ENCODE measurements at regions of chr14 and their contacts with region 1.

Region 1: GRCh38 chr14:89954070-89955028 is at the start of gene EFCAB11:
- DNase-seq: peak; percentile 85
- ATAC-seq: peak; percentile 83
- H3K4me3 Mint-ChIP-seq: peak within 1 kb of the TSS; percentile 99
- H3K27ac Mint-ChIP-seq: peak within 1 kb of the TSS; percentile 95
- H3K4me1 Mint-ChIP-seq: peaks cover 32% of the 10 kb centered on the region
- H3K27me3 Mint-ChIP-seq: no peaks in the 10 kb centered on the region
- CTCF ChIP-seq: no peak
- total RNA-seq, gene EFCAB11: 7.5 and 10.0 TPM in 2 replicates

Region 2: DNA sequence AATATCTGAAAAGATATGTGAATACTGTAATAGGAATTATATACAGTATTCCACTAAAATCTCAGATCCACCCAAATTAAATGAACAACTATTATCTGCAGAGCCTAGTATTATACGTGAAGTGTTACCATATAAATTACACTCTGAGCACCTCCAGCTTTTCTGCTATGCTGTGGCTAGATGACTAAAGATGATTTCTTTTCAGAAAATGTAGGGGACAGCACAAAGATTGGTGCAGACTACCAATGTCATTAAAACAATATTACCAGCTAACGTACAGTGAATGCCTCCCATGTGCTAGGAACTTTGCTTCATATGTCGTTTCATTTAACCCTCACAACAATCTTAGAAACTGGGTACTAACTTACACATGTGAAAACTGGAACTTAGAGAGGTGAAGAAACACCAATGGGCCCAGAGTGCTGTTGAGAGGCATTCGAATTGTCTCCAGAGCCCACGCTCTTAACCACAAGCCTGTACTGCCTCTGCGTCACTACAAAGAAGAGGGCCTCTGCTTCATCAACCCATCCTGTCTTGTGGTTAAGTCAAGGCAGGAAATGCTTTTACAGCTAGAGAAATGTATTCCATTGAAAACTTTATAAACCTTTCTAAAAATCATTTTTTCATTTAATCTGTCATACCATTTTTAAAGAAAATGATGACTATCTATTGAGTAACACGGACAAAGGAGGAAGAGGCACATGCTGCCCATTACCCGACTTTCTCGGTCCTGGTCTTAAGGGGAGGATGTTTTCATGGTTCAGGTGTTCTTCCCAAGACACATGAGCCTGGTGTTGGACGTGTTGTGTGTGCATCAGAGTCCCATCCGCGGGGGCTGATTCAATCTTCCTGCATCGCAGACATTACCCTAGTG is 1948.1 kb before region 1 on chr14:
- CTCF ChIA-PET with region 1: no interaction called
- POLR2A ChIA-PET with region 1: no interaction called
- intact Hi-C with region 1: loop called (anchors 5 kb)
- DNase-seq: no peak
- ATAC-seq: peak; percentile 79
- H3K4me3 Mint-ChIP-seq: peak overlapping the region; percentile 83
- H3K27ac Mint-ChIP-seq: peak overlapping the region; percentile 84
- H3K4me1 Mint-ChIP-seq: peaks cover 77% of the 10 kb centered on the region
- H3K27me3 Mint-ChIP-seq: no peaks in the 10 kb centered on the region
- CTCF ChIP-seq: no peak

Region 3: DNA sequence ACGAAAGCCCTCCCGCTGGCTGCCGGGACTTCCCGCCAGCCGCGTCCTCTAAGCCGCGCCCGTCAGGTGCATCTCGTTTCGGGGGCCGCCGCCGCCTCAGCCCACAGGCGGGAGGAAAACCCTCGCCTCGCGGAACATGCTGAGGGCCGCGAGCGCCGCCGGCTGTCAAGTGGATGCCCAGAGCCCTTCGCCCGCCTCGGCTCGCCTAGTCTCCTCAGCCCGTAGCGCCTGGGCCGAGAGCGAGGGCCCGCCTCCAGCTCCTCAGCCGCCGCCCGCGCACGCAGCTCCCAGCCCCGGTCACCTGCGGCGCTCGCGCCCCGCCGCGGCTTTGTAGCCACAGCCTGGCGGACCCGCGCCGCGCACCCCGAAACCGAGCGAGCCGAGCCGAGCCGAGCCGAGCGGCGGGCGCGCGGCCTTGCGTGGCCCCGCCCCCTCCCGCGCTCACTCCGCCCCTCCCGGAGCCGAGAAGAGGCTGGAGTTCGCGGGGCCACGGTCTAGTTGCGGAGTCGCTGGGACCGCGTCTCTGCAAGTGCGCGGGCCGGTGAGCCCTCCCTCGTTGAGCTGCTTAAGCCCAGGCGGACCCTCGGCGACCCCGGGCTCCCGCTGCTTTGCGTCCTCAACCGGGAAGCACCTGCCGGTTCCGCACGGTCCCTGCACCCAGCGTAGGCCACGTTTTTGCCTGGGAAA is 1161.6 kb before region 1 on chr14 and contains the start of gene EML5:
- CTCF ChIA-PET with region 1: no interaction called
- POLR2A ChIA-PET with region 1: interaction called, 4 read pairs
- intact Hi-C with region 1: loop called (anchors 2 kb)
- DNase-seq: peak; percentile 81
- ATAC-seq: peak; percentile 86
- H3K4me3 Mint-ChIP-seq: peak within 1 kb of the TSS; percentile 89
- H3K27ac Mint-ChIP-seq: peak within 1 kb of the TSS; percentile 71
- H3K4me1 Mint-ChIP-seq: peaks cover 24% of the 10 kb centered on the region
- H3K27me3 Mint-ChIP-seq: no peaks in the 10 kb centered on the region
- CTCF ChIP-seq: no peak
- total RNA-seq, gene EML5: 3.8 and 5.0 TPM in 2 replicates

Region 4: GRCh38 chr14:89485264-89485663 is 469.1 kb before region 1 on chr14:
- CTCF ChIA-PET with region 1: no interaction called
- POLR2A ChIA-PET with region 1: no interaction called
- intact Hi-C with region 1: no loop called
- DNase-seq: no peak
- ATAC-seq: no peak
- H3K4me3 Mint-ChIP-seq: no peak overlapping the region
- H3K27ac Mint-ChIP-seq: no peak overlapping the region
- H3K4me1 Mint-ChIP-seq: no peaks in the 10 kb centered on the region
- H3K27me3 Mint-ChIP-seq: no peaks in the 10 kb centered on the region
- CTCF ChIP-seq: no peak

Region 5: DNA sequence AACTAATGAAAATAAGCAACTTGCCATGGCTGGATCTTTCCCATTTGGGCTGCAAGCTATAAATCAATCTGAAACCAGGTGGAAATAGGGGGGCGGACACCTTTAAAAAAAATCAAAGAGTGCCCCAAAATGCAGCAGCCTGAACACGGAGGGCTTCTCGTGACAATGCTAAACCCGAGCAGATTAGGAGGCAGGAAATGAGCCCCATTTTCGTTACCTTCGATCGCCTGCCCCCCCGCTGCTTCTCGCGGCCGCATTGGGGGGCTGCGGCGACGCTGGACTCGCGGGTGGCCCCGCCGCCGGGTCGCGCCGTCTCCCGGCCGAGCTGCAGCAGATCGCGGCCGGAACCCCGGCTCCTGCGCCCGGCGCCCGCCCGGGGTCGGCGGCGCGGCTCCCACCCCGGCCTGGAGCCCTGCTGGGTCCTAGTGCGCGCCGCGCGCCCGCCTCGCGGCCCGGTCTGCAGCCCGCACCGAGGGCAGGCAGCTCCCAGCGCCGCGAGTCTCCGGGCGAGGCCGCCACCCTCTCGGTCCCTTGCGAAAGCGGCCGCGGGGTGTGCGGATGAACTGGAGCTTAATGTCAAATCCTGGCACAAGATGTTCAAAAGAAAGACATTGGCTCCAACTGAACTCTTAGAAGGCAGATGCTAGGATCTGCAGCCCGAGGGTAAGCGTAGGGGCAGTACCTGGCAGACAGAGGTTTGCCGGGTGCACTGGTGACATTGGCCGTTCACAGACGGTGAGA is 335.4 kb before region 1 on chr14:
- CTCF ChIA-PET with region 1: no interaction called
- POLR2A ChIA-PET with region 1: no interaction called
- intact Hi-C with region 1: loop called (anchors 2 kb)
- DNase-seq: peak; percentile 69
- ATAC-seq: peak; percentile 73
- H3K4me3 Mint-ChIP-seq: peak overlapping the region; percentile 90
- H3K27ac Mint-ChIP-seq: peak overlapping the region; percentile 86
- H3K4me1 Mint-ChIP-seq: peaks cover 68% of the 10 kb centered on the region
- H3K27me3 Mint-ChIP-seq: no peaks in the 10 kb centered on the region
- CTCF ChIP-seq: no peak

Region 6: DNA sequence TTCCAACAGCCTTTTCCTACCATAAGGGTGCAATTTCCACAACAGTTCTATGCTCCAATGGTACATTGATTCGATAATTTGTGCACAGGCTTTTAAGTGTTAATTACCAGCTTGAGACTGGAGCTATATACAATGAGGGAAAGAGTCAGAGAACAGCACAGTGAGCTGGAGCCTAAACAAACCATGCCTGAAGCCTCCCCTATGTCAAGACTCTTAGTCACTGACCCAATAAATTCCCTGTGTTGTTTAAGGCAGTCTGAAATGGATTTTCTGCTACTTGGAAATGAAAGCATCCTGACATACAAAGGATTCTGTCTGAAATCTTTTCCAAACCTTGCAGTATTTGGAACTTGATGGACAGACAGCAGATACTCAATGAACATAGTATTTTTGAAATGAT is 148.8 kb before region 1 on chr14:
- CTCF ChIA-PET with region 1: no interaction called
- POLR2A ChIA-PET with region 1: no interaction called
- intact Hi-C with region 1: no loop called
- DNase-seq: no peak
- ATAC-seq: no peak
- H3K4me3 Mint-ChIP-seq: no peak overlapping the region
- H3K27ac Mint-ChIP-seq: no peak overlapping the region
- H3K4me1 Mint-ChIP-seq: no peaks in the 10 kb centered on the region
- H3K27me3 Mint-ChIP-seq: no peaks in the 10 kb centered on the region
- CTCF ChIP-seq: no peak

Region 7: GRCh38 chr14:89973234-89973823 is 19.0 kb after region 1 on chr14:
- CTCF ChIA-PET with region 1: interaction called, 48 read pairs
- POLR2A ChIA-PET with region 1: interaction called, 5 read pairs
- intact Hi-C with region 1: loop called (anchors 1 kb)
- DNase-seq: no peak
- ATAC-seq: peak; percentile 60
- H3K4me3 Mint-ChIP-seq: no peak overlapping the region
- H3K27ac Mint-ChIP-seq: no peak overlapping the region
- H3K4me1 Mint-ChIP-seq: no peaks in the 10 kb centered on the region
- H3K27me3 Mint-ChIP-seq: no peaks in the 10 kb centered on the region
- CTCF ChIP-seq: peak; percentile 83

Region 8: DNA sequence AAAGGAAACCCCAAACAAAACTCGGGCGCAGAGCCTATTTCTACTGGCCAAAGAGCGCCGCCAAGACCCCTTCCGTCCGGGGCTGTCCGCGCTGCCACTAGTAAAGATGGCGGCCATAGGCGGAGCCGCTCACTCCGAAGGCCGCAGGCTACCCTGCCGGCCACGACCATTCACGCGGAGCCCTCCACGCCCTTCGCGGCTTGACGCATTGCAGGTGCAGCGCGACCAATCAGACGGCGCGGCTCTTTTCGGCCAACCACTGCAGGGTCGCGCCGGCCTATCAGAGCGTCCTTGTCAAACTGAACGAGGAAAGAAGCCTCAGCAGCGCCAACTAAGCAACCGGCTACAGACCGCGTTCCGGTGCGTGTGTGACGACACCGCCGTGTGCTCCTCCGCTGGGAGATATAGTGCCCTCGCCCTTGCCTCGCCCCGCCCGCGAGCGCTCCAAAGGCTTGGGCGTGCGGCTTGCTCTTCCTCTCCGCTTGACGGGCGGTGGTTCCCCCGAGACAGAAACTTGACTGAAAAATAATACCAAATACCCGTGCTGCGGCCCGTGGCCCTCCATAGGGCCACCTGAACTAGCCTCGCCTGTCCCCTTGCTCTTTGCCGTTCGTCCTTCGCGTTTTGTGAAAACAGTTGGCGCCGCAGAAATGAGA is 428.9 kb after region 1 on chr14:
- CTCF ChIA-PET with region 1: no interaction called
- POLR2A ChIA-PET with region 1: interaction called, 26 read pairs
- intact Hi-C with region 1: loop called (anchors 1 kb)
- DNase-seq: peak; percentile 94
- ATAC-seq: peak; percentile 87
- H3K4me3 Mint-ChIP-seq: no peak overlapping the region
- H3K27ac Mint-ChIP-seq: no peak overlapping the region
- H3K4me1 Mint-ChIP-seq: no peaks in the 10 kb centered on the region
- H3K27me3 Mint-ChIP-seq: no peaks in the 10 kb centered on the region
- CTCF ChIP-seq: no peak

Region 9: DNA sequence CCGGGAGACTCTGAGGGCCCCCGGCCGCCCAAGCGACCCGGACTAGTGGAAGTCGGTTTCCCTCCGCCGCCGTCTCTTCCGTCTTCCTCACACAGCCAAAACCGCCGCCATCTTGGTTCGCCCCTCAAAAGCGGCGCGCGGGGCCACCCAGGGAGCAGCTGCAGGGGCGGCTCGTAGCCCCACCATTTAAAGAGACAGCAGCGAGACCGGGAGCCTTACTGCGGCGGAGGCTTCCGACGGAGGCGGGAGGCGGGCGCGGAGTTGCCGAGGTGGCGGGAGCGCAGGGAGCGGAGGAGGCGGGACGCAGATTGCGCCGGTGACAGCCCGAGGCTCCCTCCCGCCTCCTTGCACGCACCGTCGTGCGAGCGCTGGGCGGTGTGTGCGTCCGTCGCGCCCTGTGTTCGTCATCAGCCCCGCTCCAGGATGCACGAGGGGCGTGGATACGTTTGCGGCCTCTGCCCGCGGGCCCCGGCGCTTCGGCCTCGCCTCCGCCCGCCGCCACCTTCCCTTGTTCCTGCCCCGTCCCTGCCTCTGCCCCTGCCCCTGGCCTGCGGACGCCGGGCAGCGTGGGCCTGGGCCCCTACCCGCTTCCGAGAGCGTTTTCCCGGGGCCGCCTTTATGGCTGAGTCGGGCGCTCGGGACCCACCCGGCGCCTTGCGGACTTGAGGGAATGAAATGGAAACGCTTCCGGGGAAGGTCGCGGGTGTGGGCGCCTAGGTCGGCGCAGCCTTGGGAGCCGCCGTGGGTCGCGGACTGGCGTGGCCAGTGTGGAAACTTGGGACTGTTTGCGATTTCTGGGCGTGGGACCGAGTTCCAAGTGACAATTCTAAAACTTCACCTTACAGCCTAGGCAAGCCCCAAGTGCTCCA is 1556.1 kb after region 1 on chr14 and contains the start of gene PPP4R3A:
- CTCF ChIA-PET with region 1: no interaction called
- POLR2A ChIA-PET with region 1: no interaction called
- intact Hi-C with region 1: loop called (anchors 10 kb)
- DNase-seq: peak; percentile 91
- ATAC-seq: peak; percentile 85
- H3K4me3 Mint-ChIP-seq: peak within 1 kb of the TSS; percentile 99
- H3K27ac Mint-ChIP-seq: peak within 1 kb of the TSS; percentile 100
- H3K4me1 Mint-ChIP-seq: peaks cover 32% of the 10 kb centered on the region
- H3K27me3 Mint-ChIP-seq: peaks cover 2% of the 10 kb centered on the region
- CTCF ChIP-seq: no peak
- total RNA-seq, gene PPP4R3A: 138 and 141 TPM in 2 replicates

Measured in activated B cell treated with CpG ODN at 0.5 μM for 24 hours (primary cell).